CD8-positive, alpha-beta T cell (primary cell): ENCODE measurements at regions of chr2 and their contacts with region 1.

Region 1: GRCh38 chr2:63588385-63589147 is at the starts of genes MDH1 and WDPCP:
- DNase-seq: peak; percentile 84 to 99 (median 91)
- ATAC-seq: peak; percentile 83
- H3K4me3 ChIP-seq: peak within 1 kb of the TSS; percentile 83 to 88
- H3K4me3 Mint-ChIP-seq: peak within 1 kb of the TSS; percentile 90
- H3K27ac ChIP-seq: peak within 1 kb of the TSS; percentile 75 to 95
- H3K27ac Mint-ChIP-seq: peak within 1 kb of the TSS; percentile 95
- H3K4me1 ChIP-seq: peaks cover 19% of the 10 kb centered on the region
- H3K4me1 Mint-ChIP-seq: peaks cover 44% of the 10 kb centered on the region
- H3K27me3 ChIP-seq: no peaks in the 10 kb centered on the region
- H3K27me3 Mint-ChIP-seq: no peaks in the 10 kb centered on the region
- CTCF ChIP-seq: no peak
- total RNA-seq, gene MDH1: 87.2 to 94.8 TPM
- total RNA-seq, gene WDPCP: 9.6 to 11.9 TPM

Region 2: GRCh38 chr2:61888267-61889055 is 1700.1 kb before region 1 on chr2 and contains the start of gene CCT4:
- CTCF ChIA-PET with region 1: no interaction called
- POLR2A ChIA-PET with region 1: no interaction called
- intact Hi-C with region 1: loop called in 1 of 2 experiments (anchors 1 kb)
- DNase-seq: peak; percentile 81 to 98 (median 92)
- ATAC-seq: peak; percentile 89
- H3K4me3 ChIP-seq: peak within 1 kb of the TSS; percentile 85 to 100
- H3K4me3 Mint-ChIP-seq: peak within 1 kb of the TSS; percentile 95
- H3K27ac ChIP-seq: peak within 1 kb of the TSS; percentile 99
- H3K27ac Mint-ChIP-seq: peak within 1 kb of the TSS; percentile 98
- H3K4me1 ChIP-seq: peaks cover 28% of the 10 kb centered on the region
- H3K4me1 Mint-ChIP-seq: peaks cover 33% of the 10 kb centered on the region
- H3K27me3 ChIP-seq: no peaks in the 10 kb centered on the region
- H3K27me3 Mint-ChIP-seq: no peaks in the 10 kb centered on the region
- CTCF ChIP-seq: no peak
- total RNA-seq, gene CCT4: 102 to 106 TPM

Region 3: DNA sequence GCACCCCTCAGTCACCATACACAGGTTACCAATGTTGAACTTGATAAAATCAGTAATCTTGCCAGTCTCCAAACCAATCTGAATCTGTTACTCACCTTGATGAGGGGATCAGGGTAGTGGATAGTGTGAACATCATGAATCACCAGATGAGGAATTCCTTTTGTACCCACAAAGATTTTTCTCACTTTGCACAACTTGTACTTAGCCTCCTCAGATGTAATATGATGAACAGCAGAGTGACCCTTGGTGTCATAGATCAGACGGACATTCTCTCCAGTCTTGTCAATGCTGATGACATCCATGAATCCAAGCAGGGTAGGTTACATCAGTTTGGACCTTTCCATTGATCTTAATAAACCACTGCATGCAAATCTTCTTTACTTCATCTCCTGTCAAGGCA is 54.9 kb after region 1 on chr2:
- CTCF ChIA-PET with region 1: no interaction called
- POLR2A ChIA-PET with region 1: no interaction called
- intact Hi-C with region 1: no loop called
- DNase-seq: no peak
- ATAC-seq: no peak
- H3K4me3 ChIP-seq: no peak overlapping the region
- H3K4me3 Mint-ChIP-seq: no peak overlapping the region
- H3K27ac ChIP-seq: no peak overlapping the region
- H3K27ac Mint-ChIP-seq: no peak overlapping the region
- H3K4me1 ChIP-seq: no peaks in the 10 kb centered on the region
- H3K4me1 Mint-ChIP-seq: no peaks in the 10 kb centered on the region
- H3K27me3 ChIP-seq: no peaks in the 10 kb centered on the region
- H3K27me3 Mint-ChIP-seq: peaks cover 17% of the 10 kb centered on the region
- CTCF ChIP-seq: no peak

Region 4: GRCh38 chr2:63841254-63842022 is 252.9 kb after region 1 on chr2 and contains the start of gene UGP2:
- CTCF ChIA-PET with region 1: no interaction called
- POLR2A ChIA-PET with region 1: interaction called, 21 read pairs
- intact Hi-C with region 1: loop called (anchors 1 to 2 kb)
- DNase-seq: peak; percentile 68 to 92 (median 83)
- ATAC-seq: peak; percentile 68
- H3K4me3 ChIP-seq: peak within 1 kb of the TSS; percentile 94 to 98
- H3K4me3 Mint-ChIP-seq: peak within 1 kb of the TSS; percentile 99
- H3K27ac ChIP-seq: peak within 1 kb of the TSS; percentile 81 to 89
- H3K27ac Mint-ChIP-seq: peak within 1 kb of the TSS; percentile 98
- H3K4me1 ChIP-seq: peaks cover 41% of the 10 kb centered on the region
- H3K4me1 Mint-ChIP-seq: peaks cover 52% of the 10 kb centered on the region
- H3K27me3 ChIP-seq: no peaks in the 10 kb centered on the region
- H3K27me3 Mint-ChIP-seq: no peaks in the 10 kb centered on the region
- CTCF ChIP-seq: peak; percentile 24
- total RNA-seq, gene UGP2: 43.9 to 48.2 TPM

Region 5: DNA sequence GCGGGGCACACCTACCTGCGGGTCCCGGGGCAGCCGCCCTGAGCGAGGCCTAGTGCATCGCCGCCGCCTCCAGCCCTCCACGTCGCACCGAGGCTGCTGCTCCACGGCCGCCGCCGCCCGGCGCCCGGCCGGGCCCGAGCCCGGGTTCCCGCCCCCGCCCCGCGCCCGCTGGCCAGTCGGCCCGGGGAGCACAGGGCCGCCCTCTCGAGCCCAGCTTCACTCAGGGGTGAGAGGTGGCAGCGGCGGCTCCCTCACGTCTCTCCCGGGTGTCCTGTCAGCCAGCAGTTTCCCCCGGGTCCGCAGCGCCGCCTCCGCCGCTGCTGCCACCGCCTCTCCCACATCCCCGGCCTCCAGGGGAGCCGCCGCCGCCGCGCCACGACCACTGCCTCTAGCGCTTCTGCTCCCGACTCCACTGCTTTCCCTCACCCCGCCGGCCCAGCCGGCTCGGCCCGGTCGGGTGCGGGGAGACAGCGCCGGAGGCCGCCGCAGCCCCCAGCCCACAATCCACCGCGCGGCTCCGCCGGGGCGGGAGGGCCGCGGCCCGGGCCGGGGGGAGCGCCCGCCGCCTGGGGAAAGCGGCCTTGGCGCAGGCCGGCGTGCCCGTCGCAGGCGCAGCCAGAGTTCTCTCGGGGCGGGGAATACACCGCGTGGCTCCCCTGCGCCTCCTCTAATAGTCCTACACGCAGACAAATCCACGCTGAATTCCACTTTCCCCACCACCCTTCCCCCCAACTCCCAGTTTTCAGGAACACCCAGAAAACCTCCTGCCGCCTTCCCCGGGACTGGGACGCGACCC is 430.6 kb after region 1 on chr2 and contains the start of gene VPS54:
- CTCF ChIA-PET with region 1: no interaction called
- POLR2A ChIA-PET with region 1: no interaction called
- intact Hi-C with region 1: loop called in 1 of 2 experiments (anchors 5 kb)
- DNase-seq: peak; percentile 22 to 80 (median 57)
- ATAC-seq: peak; percentile 65
- H3K4me3 ChIP-seq: peak within 1 kb of the TSS; percentile 79 to 89
- H3K4me3 Mint-ChIP-seq: peak within 1 kb of the TSS; percentile 96
- H3K27ac ChIP-seq: peak within 1 kb of the TSS; percentile 57 to 77
- H3K27ac Mint-ChIP-seq: peak within 1 kb of the TSS; percentile 97
- H3K4me1 ChIP-seq: peaks cover 31% of the 10 kb centered on the region
- H3K4me1 Mint-ChIP-seq: peaks cover 46% of the 10 kb centered on the region
- H3K27me3 ChIP-seq: no peaks in the 10 kb centered on the region
- H3K27me3 Mint-ChIP-seq: no peaks in the 10 kb centered on the region
- CTCF ChIP-seq: no peak
- total RNA-seq, gene VPS54: 7.0 to 8.5 TPM

Region 6: DNA sequence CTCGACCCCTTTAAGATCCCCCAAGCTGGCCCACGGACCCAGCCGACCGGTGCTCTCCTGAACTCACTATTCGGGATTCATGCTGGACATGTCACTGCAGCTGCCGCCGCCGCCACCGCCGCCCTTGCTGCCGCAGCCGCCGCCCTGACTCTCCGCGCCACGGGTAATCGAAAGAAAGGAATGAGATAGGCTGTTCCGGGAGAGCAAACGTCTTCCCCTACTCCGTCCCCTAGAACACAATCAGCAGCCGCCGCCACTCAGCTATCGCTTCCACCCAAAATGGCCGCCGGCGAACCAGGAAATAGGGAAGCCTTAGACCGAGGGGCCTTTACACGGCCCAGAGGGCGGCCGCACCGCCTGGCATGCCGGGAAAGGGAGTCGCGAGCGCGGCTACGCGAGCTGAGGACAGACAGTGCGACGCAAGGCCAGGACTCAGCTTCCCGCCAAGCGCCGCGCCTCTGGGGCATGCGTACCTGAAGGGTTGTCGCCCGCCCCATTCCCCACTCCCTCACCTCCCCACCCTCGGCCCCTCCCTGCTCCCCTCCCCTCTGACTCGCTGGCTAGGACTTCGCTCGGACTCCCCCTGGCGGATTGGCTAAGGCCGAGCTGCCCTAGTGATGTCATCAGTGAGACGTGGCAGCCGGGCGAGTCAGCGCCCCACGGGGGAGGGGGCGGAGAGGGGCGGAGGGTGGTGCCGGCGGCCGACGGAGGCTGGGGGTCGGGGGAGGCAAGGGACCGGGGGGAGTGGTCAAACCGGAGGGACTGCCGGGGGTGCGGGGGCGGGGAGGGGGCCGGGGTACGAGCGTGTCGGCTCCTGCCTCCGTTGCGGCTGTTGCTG is 1541.5 kb after region 1 on chr2 and contains the start of gene RAB1A:
- CTCF ChIA-PET with region 1: no interaction called
- POLR2A ChIA-PET with region 1: interaction called, 4 read pairs
- intact Hi-C with region 1: loop called (anchors 2 kb)
- DNase-seq: peak; percentile 98 to 100 (median 99)
- ATAC-seq: peak; percentile 94
- H3K4me3 ChIP-seq: peak within 1 kb of the TSS; percentile 87 to 88
- H3K4me3 Mint-ChIP-seq: peak within 1 kb of the TSS; percentile 99
- H3K27ac ChIP-seq: peak within 1 kb of the TSS; percentile 91 to 97
- H3K27ac Mint-ChIP-seq: peak within 1 kb of the TSS; percentile 98
- H3K4me1 ChIP-seq: peaks cover 40% of the 10 kb centered on the region
- H3K4me1 Mint-ChIP-seq: peaks cover 44% of the 10 kb centered on the region
- H3K27me3 ChIP-seq: no peaks in the 10 kb centered on the region
- H3K27me3 Mint-ChIP-seq: no peaks in the 10 kb centered on the region
- CTCF ChIP-seq: no peak
- total RNA-seq, gene RAB1A: 101 to 103 TPM